Esophagus muscularis mucosa (tissue), 4 donors: ENCODE measurements at regions of chr1 and their contacts with region 1.

Region 1: DNA sequence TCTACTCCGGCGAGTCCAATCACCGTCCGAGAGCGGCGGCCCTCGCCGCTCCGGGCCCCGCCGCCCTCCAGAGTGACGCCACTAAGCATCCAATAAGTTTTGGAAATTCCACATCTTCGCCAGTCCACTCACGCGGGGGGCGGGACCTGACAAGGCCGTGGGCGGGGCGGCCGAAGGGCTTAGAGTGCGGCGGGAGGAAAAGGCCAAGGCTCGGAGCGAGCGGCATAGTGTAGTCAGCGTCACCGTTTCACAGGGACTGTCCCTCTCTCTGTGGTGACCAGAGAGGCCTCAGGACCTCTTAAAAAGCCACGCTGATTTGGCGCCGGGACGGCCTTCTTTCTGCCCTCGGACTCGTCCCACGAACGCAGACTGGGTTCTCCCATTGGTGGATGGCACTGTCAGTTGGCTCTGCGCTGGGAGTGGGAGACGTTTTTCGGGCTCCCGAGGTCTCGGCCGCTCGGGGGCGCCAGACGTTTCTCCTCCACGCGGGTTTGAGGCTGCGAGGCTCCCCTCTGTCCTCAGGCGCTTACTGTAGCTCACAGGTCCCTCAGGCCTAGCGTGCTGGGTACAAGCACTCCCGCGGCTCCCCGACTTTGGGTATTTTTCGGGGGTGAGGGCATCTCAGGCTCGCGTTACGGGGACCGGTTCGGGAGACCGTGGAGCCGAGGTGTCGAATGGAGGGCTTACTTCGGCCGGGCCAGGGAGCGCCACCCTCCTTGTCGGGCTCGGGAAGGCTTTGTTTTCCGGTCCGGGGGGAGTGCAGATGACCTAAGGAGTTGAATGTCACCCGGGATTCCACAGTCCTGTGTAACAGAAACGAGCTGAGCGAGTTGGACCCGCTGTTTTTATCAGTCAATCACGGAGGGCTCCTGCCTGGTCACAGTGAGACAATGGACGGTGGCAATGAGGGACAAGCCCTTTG is 488 bp upstream of the TRIM45 start:
- DNase-seq: peak; percentile 98
- H3K4me3 ChIP-seq: peak overlapping the region; percentile 70 to 79 (median 74)
- H3K27ac ChIP-seq: peak overlapping the region; percentile 83 to 89 (median 88)
- H3K4me1 ChIP-seq: peaks cover 14 to 27% (median 21%) of the 10 kb centered on the region in 4 donors
- H3K27me3 ChIP-seq: no peaks in the 10 kb centered on the region
- CTCF ChIP-seq: peak; percentile 68 to 80 (median 71)
- EP300 ChIP-seq: no peak
- POLR2A ChIP-seq: peak; percentile 2

Region 2: DNA sequence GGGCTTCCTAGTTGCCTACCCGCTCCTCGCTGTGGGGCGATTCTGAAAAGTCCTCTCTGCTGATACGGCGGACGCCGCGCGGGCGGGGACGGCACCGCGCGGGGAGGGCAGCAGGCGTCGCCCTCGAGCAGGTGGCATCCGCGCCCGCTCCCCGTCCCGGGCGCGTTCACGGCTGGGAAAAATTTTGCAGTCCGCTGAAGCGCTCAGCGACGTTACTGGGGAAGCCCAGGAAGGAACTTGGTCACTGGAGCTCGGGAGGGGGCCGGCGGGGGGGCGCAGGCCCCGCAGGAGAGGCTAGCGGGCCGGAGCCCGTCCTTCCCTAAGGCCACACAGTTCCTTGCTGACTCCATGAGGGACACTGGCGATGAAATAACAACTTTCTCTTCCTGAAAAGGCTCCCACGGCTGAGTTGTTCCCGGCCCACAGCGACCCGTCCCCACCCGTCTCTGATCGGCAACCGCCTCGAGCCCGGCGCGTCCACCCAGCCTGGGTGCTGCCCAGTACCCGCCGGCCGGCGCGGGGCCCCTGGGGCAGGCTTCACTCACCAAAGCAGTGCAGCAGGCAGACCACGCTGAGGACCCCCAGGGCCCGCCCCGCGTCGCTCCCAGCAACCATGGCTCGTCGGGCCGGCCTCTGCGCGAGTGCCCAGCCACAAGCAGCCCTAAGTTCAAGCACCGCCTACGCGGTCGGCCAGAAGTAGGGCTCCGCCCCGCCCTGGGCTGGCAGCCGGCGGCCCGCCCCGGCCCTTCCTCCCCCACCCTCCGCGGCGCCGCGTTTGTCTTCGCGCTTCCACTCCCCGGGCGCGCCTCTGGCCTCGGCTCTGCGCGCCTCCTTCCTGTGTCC is 551.5 kb before region 1 on chr1 and contains the start of gene CD58:
- intact Hi-C with region 1: loop called (anchors 10 kb)
- DNase-seq: peak; percentile 97
- H3K4me3 ChIP-seq: peak within 1 kb of the TSS; percentile 80 to 95 (median 88)
- H3K27ac ChIP-seq: peak within 1 kb of the TSS; percentile 97 to 99 (median 98)
- H3K4me1 ChIP-seq: peaks cover 19 to 43% (median 30%) of the 10 kb centered on the region in 4 donors
- H3K27me3 ChIP-seq: no peaks in the 10 kb centered on the region
- CTCF ChIP-seq: peak; percentile 58 to 81 (median 64)
- EP300 ChIP-seq: no peak
- POLR2A ChIP-seq: peak; percentile 50
- total RNA-seq, gene CD58: 20.3 to 23.4 (median 21.7) TPM

Region 3: DNA sequence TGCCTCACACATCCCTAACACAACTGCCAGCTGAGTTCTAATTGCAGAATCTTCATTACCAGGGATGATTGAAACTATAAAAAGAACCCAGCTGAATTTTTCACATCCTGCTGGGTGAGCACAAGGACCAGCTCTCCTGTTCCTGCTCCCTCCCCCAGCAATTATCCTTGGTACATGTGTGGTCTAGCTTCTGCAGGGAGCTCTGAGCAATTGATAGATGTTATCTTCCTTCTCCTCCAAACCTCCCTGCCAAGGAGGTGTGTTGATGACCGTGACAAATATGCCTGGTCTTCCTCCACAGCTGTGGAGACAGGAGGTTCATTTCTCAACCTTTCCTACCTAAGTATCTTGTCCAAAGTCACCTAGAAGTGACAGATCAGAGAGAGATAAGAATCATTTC is 179.9 kb after region 1 on chr1:
- intact Hi-C with region 1: no loop called
- DNase-seq: no peak
- H3K4me3 ChIP-seq: no peak overlapping the region
- H3K27ac ChIP-seq: no peak overlapping the region
- H3K4me1 ChIP-seq: no peaks in the 10 kb centered on the region
- H3K27me3 ChIP-seq: no peaks in the 10 kb centered on the region
- CTCF ChIP-seq: no peak
- EP300 ChIP-seq: no peak
- POLR2A ChIP-seq: no peak

Region 4: GRCh38 chr1:117367047-117368018 is 245.3 kb after region 1 on chr1 and contains the start of gene MAN1A2:
- intact Hi-C with region 1: loop called (anchors 10 kb)
- DNase-seq: peak; percentile 96
- H3K4me3 ChIP-seq: peak within 1 kb of the TSS; percentile 78 to 91 (median 86)
- H3K27ac ChIP-seq: peak within 1 kb of the TSS; percentile 91 to 99 (median 98)
- H3K4me1 ChIP-seq: peaks cover 32 to 67% (median 65%) of the 10 kb centered on the region in 4 donors
- H3K27me3 ChIP-seq: no peaks in the 10 kb centered on the region
- CTCF ChIP-seq: no peak
- EP300 ChIP-seq: no peak
- POLR2A ChIP-seq: no peak
- total RNA-seq, gene MAN1A2: 45.4 to 51.7 (median 48.3) TPM